Activated T-helper 2 cell treated with anti-CD3 and anti-CD28 coated beads, Interferon-gamma antibody, Interleukin-2, Interleukin-4, amounts not matched to agents 10 μg/mL and 5 μg/mL and 100 μg/mL, durations not matched to agents 14 hours and 24 hours and 36 hours (primary cell): ENCODE measurements at regions of chr7 and their contacts with region 1.

Region 1: DNA sequence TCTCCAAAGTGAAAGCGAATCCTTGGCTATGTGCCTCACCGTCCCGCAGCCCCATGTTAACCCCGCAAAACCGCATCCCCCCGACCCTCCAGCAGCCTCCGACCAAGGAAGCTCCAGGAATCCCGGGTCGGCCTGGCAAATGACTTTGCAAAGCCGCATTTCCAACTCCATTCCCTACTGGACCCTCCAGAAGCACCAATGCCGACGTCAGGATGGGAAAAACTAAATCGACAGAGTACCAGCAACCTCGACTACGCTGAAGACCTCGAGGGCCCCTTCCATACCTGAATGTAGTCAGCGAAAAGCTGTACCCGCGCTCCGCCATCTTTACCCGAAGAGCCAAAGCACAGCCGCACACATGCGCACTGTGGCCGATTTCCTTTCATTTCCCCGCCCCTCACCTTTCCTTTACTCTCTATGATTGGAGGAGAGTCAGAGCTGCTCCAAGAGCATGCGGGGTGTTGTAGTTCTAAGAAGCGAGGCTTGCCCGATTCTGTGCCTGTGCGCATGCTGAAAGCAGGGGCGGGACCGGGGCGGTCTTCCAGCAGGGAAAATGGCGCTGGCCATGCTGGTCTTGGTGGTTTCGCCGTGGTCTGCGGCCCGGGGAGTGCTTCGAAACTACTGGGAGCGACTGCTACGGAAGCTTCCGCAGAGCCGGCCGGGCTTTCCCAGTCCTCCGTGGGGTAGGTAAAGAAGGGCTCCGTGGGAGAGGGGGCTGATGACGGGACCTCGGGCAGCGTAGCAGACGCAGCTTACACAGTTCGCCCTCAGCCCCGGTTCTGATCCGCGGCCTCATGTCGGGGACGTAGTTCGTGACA is at the starts of genes MRPL32 and PSMA2:
- DNase-seq: peak; percentile 94
- H3K4me3 Mint-ChIP-seq: peak within 1 kb of the TSS; percentile 100
- H3K27ac Mint-ChIP-seq: peak within 1 kb of the TSS; percentile 99
- H3K4me1 Mint-ChIP-seq: peaks cover 53% of the 10 kb centered on the region
- H3K27me3 Mint-ChIP-seq: no peaks in the 10 kb centered on the region
- total RNA-seq, gene MRPL32: 68.8 and 70.0 TPM in 2 replicates
- total RNA-seq, gene PSMA2: 204 and 218 TPM in 2 replicates

Region 2: GRCh38 chr7:42869131-42870020 is 62.7 kb before region 1 on chr7:
- intact Hi-C with region 1: loop called (anchors 5 kb)
- DNase-seq: peak; percentile 40
- H3K4me3 Mint-ChIP-seq: no peak overlapping the region
- H3K27ac Mint-ChIP-seq: peak overlapping the region; percentile 87
- H3K4me1 Mint-ChIP-seq: peaks cover 22% of the 10 kb centered on the region
- H3K27me3 Mint-ChIP-seq: no peaks in the 10 kb centered on the region

Region 3: DNA sequence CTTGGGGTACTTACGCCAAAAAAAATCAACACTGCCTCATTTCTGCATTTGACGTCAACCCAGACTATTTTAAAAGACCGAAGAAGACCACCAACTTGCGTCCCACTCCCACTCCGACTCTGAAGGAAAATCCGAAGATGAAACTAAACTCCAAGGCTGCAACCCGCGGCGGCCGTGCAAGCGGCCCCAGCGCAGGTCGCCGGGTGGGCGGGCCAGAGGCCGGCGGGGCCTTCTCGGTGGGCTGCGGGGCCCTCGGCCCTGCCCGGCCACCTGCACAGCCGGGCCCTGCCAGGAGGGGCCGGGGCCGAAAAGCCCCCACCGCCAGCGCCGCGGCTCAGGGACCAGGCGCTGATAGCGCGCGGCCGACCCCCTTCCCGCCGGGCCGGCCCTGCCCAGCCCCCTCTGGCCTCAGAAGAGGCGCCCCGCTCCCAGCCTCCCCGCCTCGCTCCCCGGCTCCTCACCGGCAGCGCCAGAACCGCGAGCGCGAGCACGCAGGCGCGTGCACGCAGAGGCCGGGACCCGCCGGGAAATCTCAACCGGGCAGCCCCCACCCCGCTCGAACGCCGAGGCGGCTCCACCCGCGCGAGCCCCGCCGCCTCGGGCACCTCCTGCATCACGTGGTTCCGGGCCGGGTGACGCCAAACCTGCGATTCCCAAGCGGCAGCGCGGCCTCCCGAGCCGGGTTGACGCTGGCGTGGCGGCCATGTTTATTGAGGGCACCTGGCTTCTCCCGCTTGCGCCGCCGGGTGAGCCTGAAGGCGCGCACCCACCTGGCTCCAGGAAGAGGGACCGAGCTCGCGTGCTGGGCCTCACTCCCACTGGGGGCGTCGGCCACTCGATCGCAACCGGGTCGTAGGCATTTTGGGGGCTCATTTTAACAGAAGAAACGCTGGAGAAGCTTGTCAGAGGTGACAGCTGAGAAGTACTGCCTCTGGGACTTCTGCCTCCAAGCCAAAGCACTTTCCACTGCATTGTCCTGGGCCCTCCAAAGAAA is 20.3 kb before region 1 on chr7 and contains the start of gene C7orf25:
- intact Hi-C with region 1: loop called (anchors 1 kb)
- DNase-seq: peak; percentile 93
- H3K4me3 Mint-ChIP-seq: peak within 1 kb of the TSS; percentile 93
- H3K27ac Mint-ChIP-seq: peak within 1 kb of the TSS; percentile 91
- H3K4me1 Mint-ChIP-seq: peaks cover 70% of the 10 kb centered on the region
- H3K27me3 Mint-ChIP-seq: no peaks in the 10 kb centered on the region
- total RNA-seq, gene C7orf25: 4.4 TPM in 2 replicates

Region 4: GRCh38 chr7:43590862-43591550 is 659.0 kb after region 1 on chr7:
- intact Hi-C with region 1: loop called (anchors 5 kb)
- DNase-seq: peak; percentile 24
- H3K4me3 Mint-ChIP-seq: no peak overlapping the region
- H3K27ac Mint-ChIP-seq: peak overlapping the region; percentile 23
- H3K4me1 Mint-ChIP-seq: peaks cover 75% of the 10 kb centered on the region
- H3K27me3 Mint-ChIP-seq: no peaks in the 10 kb centered on the region

Region 5: DNA sequence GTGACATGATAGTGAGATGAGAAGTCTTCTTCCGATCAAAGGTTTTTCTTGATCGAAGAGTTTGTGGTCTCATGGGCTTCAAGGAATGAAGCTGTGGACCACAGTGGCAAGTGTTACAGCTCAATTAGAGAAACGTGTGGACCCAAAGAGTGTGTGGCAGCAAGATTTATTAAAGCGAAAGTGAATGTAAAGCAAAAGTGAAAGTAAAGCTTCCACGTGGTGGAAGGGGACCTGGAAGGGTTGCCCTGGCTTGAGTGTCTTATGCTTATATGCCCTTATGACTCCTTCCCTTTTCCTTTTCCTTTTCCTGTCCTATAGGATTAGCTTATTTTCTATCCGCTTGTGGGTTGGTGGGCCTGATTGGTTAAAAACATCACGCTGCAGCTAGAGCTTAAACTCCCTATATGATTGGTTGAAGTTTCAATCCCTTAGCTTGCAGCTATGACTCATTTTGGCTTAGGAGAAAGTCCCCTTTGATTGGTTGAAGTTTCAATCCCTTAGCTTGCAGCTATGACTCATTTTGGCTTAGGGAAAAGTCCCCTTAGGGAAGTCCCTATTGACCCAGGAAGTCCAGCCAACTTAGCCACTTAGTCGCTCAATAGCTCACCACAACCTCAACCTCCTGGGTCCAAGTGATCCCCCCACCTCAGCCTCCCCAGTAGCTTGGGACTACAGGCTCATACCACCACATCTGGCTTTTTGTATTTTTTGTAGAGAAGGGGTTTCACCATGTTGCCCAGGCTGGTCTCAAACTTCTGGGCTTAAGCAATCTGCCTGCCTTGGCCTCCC is 902.6 kb after region 1 on chr7:
- intact Hi-C with region 1: loop called (anchors 2 kb)
- DNase-seq: peak; percentile 24
- H3K4me3 Mint-ChIP-seq: peak overlapping the region; percentile 75
- H3K27ac Mint-ChIP-seq: peak overlapping the region; percentile 83
- H3K4me1 Mint-ChIP-seq: peaks cover 15% of the 10 kb centered on the region
- H3K27me3 Mint-ChIP-seq: no peaks in the 10 kb centered on the region